B cell (primary cell): ENCODE measurements at regions of chr2 and their contacts with region 1.

Region 1: DNA sequence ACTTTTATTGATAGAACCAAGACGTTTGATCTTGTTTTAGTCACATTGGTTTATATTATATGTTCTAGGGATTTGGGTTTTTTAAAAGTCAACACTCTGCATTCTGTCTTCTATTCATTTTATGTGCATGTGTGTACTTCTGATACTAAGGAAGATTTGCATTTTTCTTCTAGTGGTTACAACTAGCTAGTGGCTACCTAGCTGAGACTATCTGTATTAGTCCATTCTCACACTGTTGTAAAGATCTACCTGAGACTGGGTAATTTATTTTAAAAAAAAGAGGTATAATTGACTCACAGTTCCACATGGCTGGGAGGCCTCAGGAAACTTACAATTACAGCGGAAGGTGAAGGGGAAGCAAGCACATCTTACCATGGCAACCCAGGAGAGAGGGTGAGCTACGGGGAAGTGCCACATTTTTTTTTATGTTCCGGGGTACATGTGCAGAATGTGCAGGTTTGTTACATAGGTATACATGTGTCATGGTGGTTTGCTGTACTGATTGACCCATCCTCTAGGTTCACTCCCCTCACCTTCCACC is 69.9 kb downstream of the SP100 start:
- DNase-seq: no peak
- ATAC-seq: no peak
- H3K4me3 ChIP-seq: no peak overlapping the region
- H3K4me3 Mint-ChIP-seq: no peak overlapping the region
- H3K27ac ChIP-seq: peak overlapping the region in 1 of 2 donors; percentile 48
- H3K27ac Mint-ChIP-seq: peak overlapping the region; percentile 50
- H3K4me1 ChIP-seq: peaks cover 0 to 6% of the 10 kb centered on the region in 2 donors
- H3K4me1 Mint-ChIP-seq: peaks cover 44% of the 10 kb centered on the region
- H3K27me3 ChIP-seq: no peaks in the 10 kb centered on the region
- H3K27me3 Mint-ChIP-seq: no peaks in the 10 kb centered on the region
- CTCF ChIP-seq: no peak

Region 2: GRCh38 chr2:230496891-230497290 is 11.0 kb after region 1 on chr2:
- CTCF ChIA-PET with region 1: no interaction called
- POLR2A ChIA-PET with region 1: no interaction called
- intact Hi-C with region 1: loop called (anchors 2 kb)
- DNase-seq: peak; percentile 32
- ATAC-seq: peak; percentile 68
- H3K4me3 ChIP-seq: peak overlapping the region in 2 of 5 experiments; percentile 19 to 57
- H3K4me3 Mint-ChIP-seq: peak overlapping the region; percentile 85
- H3K27ac ChIP-seq: peak overlapping the region; percentile 67 to 83
- H3K27ac Mint-ChIP-seq: peak overlapping the region; percentile 97
- H3K4me1 ChIP-seq: peaks cover 28 to 37% of the 10 kb centered on the region in 2 donors
- H3K4me1 Mint-ChIP-seq: peaks cover 58% of the 10 kb centered on the region
- H3K27me3 ChIP-seq: no peaks in the 10 kb centered on the region
- H3K27me3 Mint-ChIP-seq: no peaks in the 10 kb centered on the region
- CTCF ChIP-seq: no peak

Region 3: DNA sequence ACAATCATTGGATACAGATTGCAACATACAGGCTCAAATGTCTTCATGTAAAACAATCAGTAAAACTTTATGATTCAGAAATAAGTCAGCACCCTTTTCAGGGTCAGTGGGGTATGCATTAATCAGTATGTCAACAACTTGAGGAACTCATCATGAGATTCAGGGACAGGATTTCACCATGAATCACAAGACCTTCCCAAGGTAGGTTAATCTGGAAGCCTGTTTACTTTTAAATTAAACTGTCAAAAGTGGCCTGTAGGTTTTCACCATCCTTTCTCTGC is 34.9 kb after region 1 on chr2:
- CTCF ChIA-PET with region 1: no interaction called
- POLR2A ChIA-PET with region 1: interaction called, 10 read pairs
- intact Hi-C with region 1: no loop called
- DNase-seq: no peak
- ATAC-seq: no peak
- H3K4me3 ChIP-seq: no peak overlapping the region
- H3K4me3 Mint-ChIP-seq: no peak overlapping the region
- H3K27ac ChIP-seq: no peak overlapping the region
- H3K27ac Mint-ChIP-seq: no peak overlapping the region
- H3K4me1 ChIP-seq: peaks cover 6 to 11% of the 10 kb centered on the region in 2 donors
- H3K4me1 Mint-ChIP-seq: peaks cover 17% of the 10 kb centered on the region
- H3K27me3 ChIP-seq: no peaks in the 10 kb centered on the region
- H3K27me3 Mint-ChIP-seq: no peaks in the 10 kb centered on the region
- CTCF ChIP-seq: no peak